HepG2 (cell line): ENCODE measurements at regions of chr6 and their contacts with region 1.

Region 1: GRCh38 chr6:46838033-46838432 is 44.8 kb downstream of the MEP1A start:
- DNase-seq: no peak
- ATAC-seq: no peak
- H3K4me3 ChIP-seq: no peak overlapping the region
- H3K27ac ChIP-seq: no peak overlapping the region
- H3K4me1 ChIP-seq: no peaks in the 10 kb centered on the region
- H3K27me3 ChIP-seq: no peaks in the 10 kb centered on the region
- CTCF ChIP-seq: no peak
- EP300 ChIP-seq: no peak
- POLR2A ChIP-seq: no peak
- RAD21 ChIP-seq: no peak

Region 2: DNA sequence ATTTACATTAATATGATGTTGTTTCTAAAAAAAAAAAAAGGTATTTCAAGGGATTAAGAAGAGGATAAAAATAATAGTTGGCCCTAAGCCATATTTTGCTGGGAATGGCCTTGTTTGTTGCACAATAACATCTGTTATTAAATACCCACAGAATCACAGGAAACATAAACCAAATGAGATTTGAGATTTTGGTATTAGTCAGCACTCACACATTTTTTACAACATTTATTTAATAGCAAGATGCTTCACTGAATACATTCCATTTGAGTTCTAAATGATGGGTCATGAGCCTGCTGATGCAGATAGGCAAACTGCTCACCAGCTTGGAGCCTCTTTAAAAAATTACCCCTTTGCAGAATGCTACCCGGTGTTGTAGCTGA is 574.3 kb before region 1 on chr6:
- CTCF ChIA-PET with region 1: no interaction called
- POLR2A ChIA-PET with region 1: no interaction called
- in situ Hi-C with region 1: no loop called
- intact Hi-C with region 1: no loop called
- DNase-seq: no peak
- ATAC-seq: no peak
- H3K4me3 ChIP-seq: no peak overlapping the region
- H3K27ac ChIP-seq: no peak overlapping the region
- H3K4me1 ChIP-seq: no peaks in the 10 kb centered on the region
- H3K27me3 ChIP-seq: no peaks in the 10 kb centered on the region
- CTCF ChIP-seq: no peak
- EP300 ChIP-seq: no peak
- POLR2A ChIP-seq: no peak
- RAD21 ChIP-seq: no peak

Region 3: DNA sequence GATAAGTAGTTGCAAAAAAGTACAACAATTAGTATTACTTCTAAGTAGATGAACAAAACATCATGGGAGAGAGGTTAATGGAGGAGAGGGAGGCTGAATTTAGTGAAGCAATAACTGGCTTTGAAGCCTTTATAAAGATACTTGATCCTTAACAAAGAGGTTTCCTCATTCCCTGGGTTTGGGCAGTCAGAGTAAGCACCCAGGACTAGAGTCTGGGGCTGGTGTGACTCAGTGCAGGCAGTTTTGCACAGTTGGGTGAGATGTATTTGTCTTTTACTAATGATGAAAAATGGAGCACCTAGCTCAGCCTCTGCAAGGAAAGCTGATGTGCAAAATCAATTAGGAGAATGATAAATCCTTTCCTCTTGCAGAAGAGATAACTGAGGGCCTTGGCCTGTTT is 931.9 kb after region 1 on chr6:
- CTCF ChIA-PET with region 1: no interaction called
- POLR2A ChIA-PET with region 1: no interaction called
- in situ Hi-C with region 1: no loop called
- intact Hi-C with region 1: loop called (anchors 5 kb)
- DNase-seq: no peak
- ATAC-seq: no peak
- H3K4me3 ChIP-seq: no peak overlapping the region
- H3K27ac ChIP-seq: no peak overlapping the region
- H3K4me1 ChIP-seq: no peaks in the 10 kb centered on the region
- H3K27me3 ChIP-seq: no peaks in the 10 kb centered on the region
- CTCF ChIP-seq: no peak
- EP300 ChIP-seq: no peak
- POLR2A ChIP-seq: no peak
- RAD21 ChIP-seq: no peak